WTC11 (cell line): ENCODE measurements at regions of chr1 and their contacts with region 1.

Region 1: GRCh38 chr1:64112281-64112680 is 91.1 kb upstream of the UBE2U start:
- DNase-seq: no peak
- ATAC-seq: no peak
- H3K4me3 Mint-ChIP-seq: no peak overlapping the region
- H3K27ac Mint-ChIP-seq: no peak overlapping the region; the same call in 1 of the 2 replicates
- H3K4me1 Mint-ChIP-seq: peaks cover 31% of the 10 kb centered on the region
- H3K27me3 Mint-ChIP-seq: no peaks in the 10 kb centered on the region
- CTCF ChIP-seq: no peak

Region 2: DNA sequence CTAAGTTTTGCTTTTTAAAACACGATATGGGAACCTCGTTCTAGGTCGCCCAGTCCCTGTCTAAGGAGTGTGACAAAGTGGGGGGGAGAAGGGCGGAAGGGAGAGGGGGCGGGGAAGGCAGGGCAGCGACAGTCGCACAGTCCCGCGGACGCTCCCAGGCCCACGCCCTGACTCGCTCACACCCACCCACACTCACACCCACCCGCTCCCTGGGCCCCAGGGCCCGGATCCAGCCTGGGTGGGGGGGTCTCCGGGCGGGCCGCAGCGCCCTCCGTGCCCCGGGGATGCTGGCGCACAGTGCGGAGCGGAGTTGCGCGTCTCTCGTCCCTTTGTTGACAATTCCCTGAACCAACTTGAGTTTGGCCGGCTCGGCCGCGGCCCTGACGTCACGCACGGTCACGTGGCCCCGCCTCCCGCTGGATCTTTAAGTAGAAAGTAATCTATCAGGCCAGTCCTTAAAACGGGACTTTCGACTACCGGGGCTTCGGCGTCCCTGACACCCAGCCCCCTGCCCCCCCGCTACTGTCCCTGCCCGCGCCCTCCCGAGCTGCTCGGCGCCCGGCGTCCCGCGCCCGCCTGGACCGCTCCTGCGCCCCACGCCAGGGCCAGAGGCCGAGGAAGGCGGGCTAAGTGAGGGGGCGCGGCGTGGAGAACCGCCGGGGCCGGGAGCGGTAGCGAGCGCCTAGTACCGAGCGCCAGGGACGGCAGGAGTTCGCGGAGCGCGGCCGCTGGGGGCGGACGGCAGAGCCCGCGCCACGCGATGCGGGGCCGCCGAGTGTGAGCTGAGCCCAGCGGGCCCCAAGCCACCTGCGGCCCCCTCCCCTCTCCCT is 790.0 kb before region 1 on chr1 and contains the start of gene FOXD3:
- CTCF ChIA-PET with region 1: no interaction called
- POLR2A ChIA-PET with region 1: interaction called, 10 read pairs
- DNase-seq: peak; percentile 94
- ATAC-seq: peak; percentile 13
- H3K4me3 Mint-ChIP-seq: peak within 1 kb of the TSS; percentile 94
- H3K27ac Mint-ChIP-seq: peak within 1 kb of the TSS; percentile 97
- H3K4me1 Mint-ChIP-seq: peaks cover 56% of the 10 kb centered on the region
- H3K27me3 Mint-ChIP-seq: peaks cover 52% of the 10 kb centered on the region
- CTCF ChIP-seq: no peak
- total RNA-seq, gene FOXD3: 27.5 to 37.1 TPM (median 34.7 TPM) in 3 replicates

Region 3: DNA sequence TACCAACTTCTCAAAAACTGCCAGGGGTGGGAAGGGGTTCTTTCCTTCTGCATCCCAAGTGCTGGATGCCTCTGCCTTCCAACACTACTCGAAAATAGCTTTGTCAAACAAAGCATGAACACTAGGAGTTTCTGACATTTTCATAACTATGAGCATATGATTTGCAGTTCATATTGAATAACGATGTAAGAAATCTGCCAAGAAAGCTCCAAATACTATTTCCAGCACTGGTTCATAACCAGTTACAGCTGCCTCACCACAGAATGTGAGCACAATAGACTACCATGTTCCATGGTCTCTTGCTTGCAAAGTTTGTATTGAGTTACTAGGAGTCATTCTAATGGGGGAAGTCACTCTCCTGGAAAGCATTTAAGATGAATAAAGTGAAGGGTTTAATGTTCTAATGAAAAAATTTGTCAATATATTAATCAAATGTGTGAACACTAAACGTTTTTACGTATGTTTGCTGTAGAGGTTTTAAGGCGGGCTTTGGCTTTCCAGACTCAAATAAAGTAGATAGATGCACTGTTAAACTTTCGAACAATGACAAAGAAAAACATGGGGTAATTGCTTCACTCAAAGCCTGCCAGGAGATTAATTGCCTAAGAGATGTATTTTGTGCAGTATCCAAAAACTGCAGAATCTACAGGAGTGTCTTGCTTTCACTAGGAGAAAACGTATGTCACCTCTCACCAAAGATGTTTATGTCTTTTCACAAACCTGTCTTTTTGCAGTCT is 12.6 kb after region 1 on chr1:
- CTCF ChIA-PET with region 1: no interaction called
- POLR2A ChIA-PET with region 1: no interaction called
- DNase-seq: no peak
- ATAC-seq: no peak
- H3K4me3 Mint-ChIP-seq: no peak overlapping the region
- H3K27ac Mint-ChIP-seq: no peak overlapping the region
- H3K4me1 Mint-ChIP-seq: peaks cover 5% of the 10 kb centered on the region; the same call in 1 of the 2 replicates
- H3K27me3 Mint-ChIP-seq: no peaks in the 10 kb centered on the region
- CTCF ChIP-seq: no peak

Region 4: DNA sequence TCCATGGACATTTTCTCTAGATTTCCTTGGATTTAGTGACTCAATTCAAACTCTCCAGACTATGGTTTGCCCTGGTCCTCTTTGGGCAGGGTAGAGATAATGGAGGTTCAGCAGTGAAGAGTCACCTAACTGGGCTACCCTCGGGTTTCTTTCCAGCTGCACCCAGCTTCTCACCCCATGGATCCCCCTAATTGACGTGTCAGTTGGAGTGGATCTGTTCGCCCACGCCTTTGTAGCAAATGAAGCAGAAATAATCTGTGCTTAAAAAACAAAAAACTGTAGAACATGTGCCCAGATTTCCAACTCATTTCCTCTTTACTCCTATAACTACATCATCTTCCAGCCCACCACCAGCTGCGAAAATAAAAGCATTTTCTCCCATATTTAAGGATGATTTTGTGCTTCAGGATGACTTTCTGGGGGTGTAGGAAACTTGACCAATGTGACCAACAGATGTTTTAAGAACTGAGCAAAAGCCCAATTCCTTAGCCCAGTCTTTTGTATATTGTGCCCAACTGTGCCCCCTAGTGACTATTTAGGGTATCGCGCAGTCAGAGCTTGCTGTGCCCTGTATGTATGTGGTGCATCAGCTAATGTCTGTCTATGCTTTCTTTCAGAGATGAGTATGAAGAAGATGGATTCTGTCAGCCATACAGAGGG is 24.6 kb after region 1 on chr1:
- CTCF ChIA-PET with region 1: interaction called, 15 read pairs
- POLR2A ChIA-PET with region 1: no interaction called
- DNase-seq: peak; percentile 84
- ATAC-seq: peak; percentile 92
- H3K4me3 Mint-ChIP-seq: no peak overlapping the region
- H3K27ac Mint-ChIP-seq: no peak overlapping the region
- H3K4me1 Mint-ChIP-seq: peaks cover 7% of the 10 kb centered on the region
- H3K27me3 Mint-ChIP-seq: no peaks in the 10 kb centered on the region
- CTCF ChIP-seq: peak; percentile 90